ENCODE measurements at regions of chr12 and their contacts with region 1.

Region 1: DNA sequence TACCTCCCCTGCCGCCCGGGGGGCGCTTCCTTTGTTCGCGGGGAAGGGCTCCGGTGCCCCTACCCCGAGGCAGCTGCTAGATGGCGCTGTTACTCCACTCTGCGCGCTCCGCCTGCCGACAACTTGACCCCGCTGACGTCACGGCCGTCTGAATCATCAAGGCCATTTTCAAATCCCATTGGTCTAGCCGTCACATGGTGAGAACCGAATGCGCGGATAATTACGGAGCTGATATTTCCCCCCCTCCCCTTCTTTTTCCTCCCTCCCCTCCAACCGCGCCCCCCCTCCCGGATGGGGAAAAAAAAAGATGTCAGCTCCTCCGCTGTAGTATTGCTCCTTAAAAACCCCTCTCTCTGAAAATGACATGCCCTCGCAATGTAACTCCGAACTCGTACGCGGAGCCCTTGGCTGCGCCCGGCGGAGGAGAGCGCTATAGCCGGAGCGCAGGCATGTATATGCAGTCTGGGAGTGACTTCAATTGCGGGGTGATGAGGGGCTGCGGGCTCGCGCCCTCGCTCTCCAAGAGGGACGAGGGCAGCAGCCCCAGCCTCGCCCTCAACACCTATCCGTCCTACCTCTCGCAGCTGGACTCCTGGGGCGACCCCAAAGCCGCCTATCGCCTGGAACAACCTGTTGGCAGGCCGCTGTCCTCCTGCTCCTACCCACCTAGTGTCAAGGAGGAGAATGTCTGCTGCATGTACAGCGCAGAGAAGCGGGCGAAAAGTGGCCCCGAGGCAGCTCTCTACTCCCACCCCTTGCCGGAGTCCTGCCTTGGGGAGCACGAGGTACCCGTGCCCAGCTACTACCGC is at the start of gene HOXC10:
- DNase-seq: peak; percentile 93 to 99
- ATAC-seq: peak; percentile 88
- H3K4me3 ChIP-seq: no peak within 1 kb of the TSS
- H3K27ac ChIP-seq: no peak within 1 kb of the TSS
- H3K4me1 ChIP-seq: no peaks in the 10 kb centered on the region
- H3K27me3 ChIP-seq: no peaks in the 10 kb centered on the region
- total RNA-seq, gene HOXC10: 1.6 to 32.0 TPM

Region 2: DNA sequence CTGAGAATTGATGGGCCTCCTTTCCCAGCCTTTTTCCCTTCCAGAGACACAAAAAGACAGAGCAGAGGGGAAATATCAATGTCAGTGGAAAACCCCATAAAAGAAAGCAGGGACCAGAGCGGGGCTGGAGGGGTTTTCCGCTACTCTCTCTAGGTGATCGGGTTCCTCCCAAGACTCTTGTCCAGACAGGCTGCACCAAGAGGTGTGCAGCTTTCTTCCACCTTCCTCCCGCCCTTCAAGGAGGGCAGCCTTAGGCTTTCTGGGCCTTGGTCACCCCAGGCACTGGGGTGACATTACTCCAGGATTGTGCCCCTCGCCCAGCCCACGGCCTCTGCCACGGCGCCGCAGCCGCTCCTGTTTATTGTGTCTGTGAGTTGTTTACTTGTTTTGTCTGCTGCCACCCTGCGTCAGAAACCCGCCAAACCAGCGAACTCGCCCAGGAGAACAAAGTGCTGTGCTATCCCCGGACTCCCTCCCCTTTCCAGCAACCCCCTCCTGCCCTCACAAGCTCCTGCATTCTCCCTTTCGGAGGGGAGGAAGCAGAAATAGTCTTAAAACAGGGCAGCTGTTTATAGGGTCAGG is 36.4 kb after region 1 on chr12:
- intact Hi-C with region 1: no loop called
- DNase-seq: peak in 1 of 2 donors; percentile 32
- ATAC-seq: no peak
- H3K4me3 ChIP-seq: no peak overlapping the region
- H3K27ac ChIP-seq: no peak overlapping the region
- H3K4me1 ChIP-seq: no peaks in the 10 kb centered on the region
- H3K27me3 ChIP-seq: no peaks in the 10 kb centered on the region

Region 3: DNA sequence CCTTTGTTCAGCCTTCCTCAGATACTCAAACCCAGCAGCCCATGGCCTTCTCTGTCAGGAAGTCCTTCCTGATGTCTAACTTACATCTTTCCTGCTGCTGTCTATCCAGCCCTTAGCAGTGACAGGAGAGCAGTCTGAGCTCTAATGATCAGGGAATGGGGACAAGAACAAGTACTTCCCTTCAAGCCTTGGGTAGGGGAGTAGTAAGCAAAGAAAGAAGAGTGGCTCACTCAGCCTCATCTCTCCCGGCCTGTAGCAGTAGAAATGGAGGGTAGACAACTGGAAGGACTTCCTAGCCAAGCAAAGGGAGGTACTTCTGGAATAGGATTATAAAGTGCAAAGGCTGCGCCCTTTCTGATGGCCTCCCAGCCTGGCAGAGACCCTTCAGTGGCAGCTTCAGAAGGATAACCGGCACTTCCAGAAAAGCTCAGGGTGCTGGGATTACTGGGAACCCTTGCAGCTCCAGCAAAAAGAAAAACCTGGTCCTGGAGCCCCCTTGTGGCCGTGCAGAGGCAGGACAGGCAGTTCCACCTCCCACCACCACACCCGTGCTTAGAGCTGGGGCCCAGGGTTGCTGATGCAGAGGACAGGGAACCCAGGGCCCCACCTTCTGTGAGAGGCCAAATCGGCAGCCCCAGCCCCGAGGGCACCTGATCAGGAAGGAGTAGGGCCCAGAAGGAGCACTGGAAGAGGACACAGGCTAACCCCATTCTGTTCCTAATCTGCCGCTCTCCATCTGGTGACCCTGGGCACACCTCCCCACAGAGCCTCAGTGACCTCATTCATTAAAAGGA is 216.1 kb after region 1 on chr12:
- intact Hi-C with region 1: loop called (anchors 5 kb)
- DNase-seq: peak; percentile 74 to 89
- ATAC-seq: peak; percentile 88
- H3K4me3 ChIP-seq: no peak overlapping the region
- H3K27ac ChIP-seq: no peak overlapping the region
- H3K4me1 ChIP-seq: no peaks in the 10 kb centered on the region
- H3K27me3 ChIP-seq: no peaks in the 10 kb centered on the region

Region 4: DNA sequence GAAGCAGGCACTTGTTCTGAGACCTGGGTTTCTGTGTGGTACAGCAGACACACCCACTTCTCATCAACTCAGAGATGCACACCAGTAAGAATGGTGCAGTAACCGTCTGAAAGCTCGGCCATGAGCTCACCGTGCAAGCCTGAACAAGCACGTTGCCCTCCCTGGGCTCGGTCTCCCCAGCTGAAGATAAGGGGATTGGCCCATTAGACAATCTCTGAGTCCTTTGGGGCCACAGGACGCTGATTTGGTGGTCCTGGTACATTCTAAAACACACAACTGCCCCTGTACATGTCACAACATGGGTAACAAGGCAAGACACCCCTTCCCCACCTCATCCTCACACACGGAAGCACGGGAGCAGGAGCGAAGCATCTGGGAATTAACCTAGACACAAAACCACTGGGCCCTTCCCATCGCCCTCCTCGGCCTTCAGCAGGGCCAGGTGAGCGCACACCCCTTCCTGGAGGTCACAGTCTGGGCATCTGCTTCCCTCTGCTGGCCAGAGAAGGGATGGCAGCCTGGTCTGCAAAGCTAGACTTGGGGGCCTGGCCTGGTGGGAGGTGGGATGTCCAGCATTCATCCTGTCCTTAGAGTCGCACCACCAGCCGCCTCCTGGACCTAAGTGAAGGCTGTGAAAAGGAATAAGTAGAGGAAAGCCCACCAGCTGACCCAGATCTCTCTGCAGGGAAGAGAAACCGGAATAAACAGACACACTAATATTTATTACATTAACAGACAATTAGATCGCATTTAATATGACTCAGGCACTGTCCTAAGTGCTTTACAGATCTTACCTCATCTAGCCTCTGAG is 222.6 kb after region 1 on chr12:
- intact Hi-C with region 1: loop called (anchors 5 kb)
- DNase-seq: peak; percentile 76 to 94
- ATAC-seq: peak; percentile 80
- H3K4me3 ChIP-seq: no peak overlapping the region
- H3K27ac ChIP-seq: no peak overlapping the region
- H3K4me1 ChIP-seq: no peaks in the 10 kb centered on the region
- H3K27me3 ChIP-seq: no peaks in the 10 kb centered on the region

Measured in aorta (tissue), 5 donors.